HCT116 (cell line): ENCODE measurements at regions of chrX and their contacts with region 1.

Region 1: GRCh38 chrX:38175140-38175539 is 45.5 kb downstream of the SRPX start:
- DNase-seq: peak; percentile 24
- ATAC-seq: peak; percentile 86
- H3K4me3 ChIP-seq: no peak overlapping the region
- H3K27ac ChIP-seq: no peak overlapping the region
- H3K4me1 ChIP-seq: no peaks in the 10 kb centered on the region
- H3K27me3 ChIP-seq: no peaks in the 10 kb centered on the region
- CTCF ChIP-seq: peak; percentile 42 to 60 (median 56); a peak in 5 of 6 replicates
- POLR2A ChIP-seq: no peak
- RAD21 ChIP-seq: peak; percentile 78

Region 2: DNA sequence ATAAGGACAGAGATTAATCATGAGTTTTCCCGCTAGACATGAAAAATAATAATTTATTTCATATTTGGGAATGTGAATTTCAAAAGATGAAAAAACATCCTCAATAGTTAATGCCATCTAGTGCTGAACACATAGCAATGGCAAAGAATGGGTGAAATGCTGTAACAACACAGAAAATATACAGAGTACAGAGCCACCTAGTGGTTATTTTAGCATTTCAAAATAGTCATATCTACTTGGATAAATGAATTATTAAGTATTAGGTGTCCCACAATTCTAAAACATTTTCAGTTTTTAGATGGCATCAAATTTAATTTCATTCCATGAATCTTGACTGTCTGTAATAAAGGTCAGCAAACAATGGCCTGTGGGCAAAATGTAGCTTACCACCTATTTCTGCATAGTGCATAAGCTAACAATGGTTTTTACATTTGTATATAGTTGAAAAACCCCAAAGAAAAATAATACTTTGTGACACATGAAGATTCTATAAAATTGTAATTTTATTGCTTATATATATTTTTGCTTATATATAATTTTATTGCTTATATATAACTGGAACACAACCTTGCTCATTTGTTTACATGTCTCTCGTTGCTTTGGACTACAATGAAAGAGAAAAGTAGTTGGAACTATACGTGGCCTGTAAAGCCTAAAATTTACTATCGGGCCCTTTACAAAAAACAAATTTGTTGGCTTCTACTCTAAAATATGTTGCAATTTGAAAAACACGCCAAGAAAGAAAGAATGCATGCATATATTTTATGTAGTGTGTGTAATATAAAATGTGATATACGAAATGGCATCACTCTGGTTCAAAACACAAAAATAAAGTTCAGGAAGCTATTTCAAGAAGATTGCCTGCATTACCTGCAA is 1266.1 kb before region 1 on chrX:
- CTCF ChIA-PET with region 1: no interaction called
- POLR2A ChIA-PET with region 1: no interaction called
- RAD21 ChIA-PET with region 1: no interaction called
- intact Hi-C with region 1: loop called (anchors 5 kb)
- DNase-seq: peak; percentile 4
- ATAC-seq: peak; percentile 49; the same call in 1 of the 2 replicates
- H3K4me3 ChIP-seq: no peak overlapping the region
- H3K27ac ChIP-seq: no peak overlapping the region
- H3K4me1 ChIP-seq: no peaks in the 10 kb centered on the region
- H3K27me3 ChIP-seq: no peaks in the 10 kb centered on the region
- CTCF ChIP-seq: peak; percentile 38 to 57 (median 48); a peak in 5 of 6 replicates
- POLR2A ChIP-seq: no peak
- RAD21 ChIP-seq: peak; percentile 30; the same call in 1 of the 2 replicates

Region 3: GRCh38 chrX:37509349-37509748 is 665.8 kb before region 1 on chrX:
- CTCF ChIA-PET with region 1: interaction called, 3 read pairs
- POLR2A ChIA-PET with region 1: no interaction called
- RAD21 ChIA-PET with region 1: no interaction called
- intact Hi-C with region 1: loop called (anchors 5 kb)
- DNase-seq: no peak
- ATAC-seq: peak; percentile 75
- H3K4me3 ChIP-seq: no peak overlapping the region
- H3K27ac ChIP-seq: no peak overlapping the region
- H3K4me1 ChIP-seq: no peaks in the 10 kb centered on the region
- H3K27me3 ChIP-seq: no peaks in the 10 kb centered on the region
- CTCF ChIP-seq: peak; percentile 21 to 35 (median 26); a peak in 4 of 6 replicates
- POLR2A ChIP-seq: no peak
- RAD21 ChIP-seq: peak; percentile 48

Region 4: DNA sequence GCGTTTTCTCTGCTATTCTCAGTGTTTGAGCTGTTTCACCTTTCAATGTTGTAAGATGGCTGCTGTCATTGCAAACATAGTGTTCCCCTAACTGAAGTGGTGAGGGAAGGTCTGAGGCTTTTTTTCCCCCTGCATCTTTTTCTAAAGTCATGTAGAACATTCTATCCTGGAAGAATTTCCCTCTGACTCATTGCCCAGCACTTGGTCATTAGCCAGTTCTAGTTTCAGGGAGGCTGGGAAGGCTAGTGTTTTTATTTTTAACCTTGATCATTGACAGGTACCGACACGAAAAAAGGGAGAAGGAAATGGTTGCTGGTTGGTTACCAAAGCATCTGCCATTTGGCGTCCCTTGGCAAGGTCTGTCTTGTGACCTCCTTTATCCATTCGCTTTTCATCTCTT is 597.1 kb before region 1 on chrX:
- CTCF ChIA-PET with region 1: no interaction called
- POLR2A ChIA-PET with region 1: no interaction called
- RAD21 ChIA-PET with region 1: no interaction called
- intact Hi-C with region 1: loop called (anchors 5 kb)
- DNase-seq: no peak
- ATAC-seq: no peak
- H3K4me3 ChIP-seq: no peak overlapping the region
- H3K27ac ChIP-seq: no peak overlapping the region
- H3K4me1 ChIP-seq: no peaks in the 10 kb centered on the region
- H3K27me3 ChIP-seq: no peaks in the 10 kb centered on the region
- CTCF ChIP-seq: no peak
- POLR2A ChIP-seq: no peak
- RAD21 ChIP-seq: no peak

Region 5: DNA sequence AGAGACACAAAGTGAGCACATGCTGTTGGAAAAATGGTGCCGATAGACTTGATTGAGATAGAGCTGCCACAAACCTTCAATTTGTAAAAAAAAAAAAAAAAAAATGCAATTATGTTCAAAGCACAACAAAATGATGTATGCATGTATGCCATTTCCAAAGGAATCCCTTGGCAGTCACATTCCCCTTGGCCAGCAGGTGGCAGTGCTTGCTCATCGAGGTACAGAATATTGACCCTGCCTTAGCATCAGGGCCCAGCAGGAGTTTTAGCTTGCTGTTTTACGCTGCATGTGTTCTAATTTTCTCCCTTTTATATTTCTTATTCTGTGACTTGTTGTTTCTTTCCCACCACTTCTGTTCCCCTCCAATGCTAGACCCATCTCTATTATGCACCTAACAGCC is 429.8 kb before region 1 on chrX:
- CTCF ChIA-PET with region 1: interaction called, 4 read pairs
- POLR2A ChIA-PET with region 1: no interaction called
- RAD21 ChIA-PET with region 1: no interaction called
- intact Hi-C with region 1: loop called (anchors 2 kb)
- DNase-seq: peak; percentile 18
- ATAC-seq: peak; percentile 80
- H3K4me3 ChIP-seq: no peak overlapping the region
- H3K27ac ChIP-seq: no peak overlapping the region
- H3K4me1 ChIP-seq: peaks cover 0 to 9% of the 10 kb centered on the region in 2 experiments; a peak in 1 of 4 replicates
- H3K27me3 ChIP-seq: no peaks in the 10 kb centered on the region
- CTCF ChIP-seq: peak; percentile 53 to 69 (median 56)
- POLR2A ChIP-seq: no peak
- RAD21 ChIP-seq: peak; percentile 66

Region 6: GRCh38 chrX:37926700-37927099 is 248.4 kb before region 1 on chrX:
- CTCF ChIA-PET with region 1: no interaction called
- POLR2A ChIA-PET with region 1: no interaction called
- RAD21 ChIA-PET with region 1: no interaction called
- intact Hi-C with region 1: loop called (anchors 1 kb)
- DNase-seq: no peak
- ATAC-seq: peak; percentile 67
- H3K4me3 ChIP-seq: no peak overlapping the region
- H3K27ac ChIP-seq: no peak overlapping the region
- H3K4me1 ChIP-seq: peaks cover 0 to 6% of the 10 kb centered on the region in 2 experiments; a peak in 1 of 4 replicates
- H3K27me3 ChIP-seq: no peaks in the 10 kb centered on the region
- CTCF ChIP-seq: peak; percentile 28 to 54 (median 46); a peak in 5 of 6 replicates
- POLR2A ChIP-seq: no peak
- RAD21 ChIP-seq: peak; percentile 67

Region 7: GRCh38 chrX:38142610-38143009 is 32.5 kb before region 1 on chrX:
- CTCF ChIA-PET with region 1: no interaction called
- POLR2A ChIA-PET with region 1: no interaction called
- RAD21 ChIA-PET with region 1: no interaction called
- intact Hi-C with region 1: no loop called
- DNase-seq: no peak
- ATAC-seq: no peak
- H3K4me3 ChIP-seq: no peak overlapping the region
- H3K27ac ChIP-seq: no peak overlapping the region
- H3K4me1 ChIP-seq: no peaks in the 10 kb centered on the region
- H3K27me3 ChIP-seq: no peaks in the 10 kb centered on the region
- CTCF ChIP-seq: no peak
- POLR2A ChIP-seq: no peak
- RAD21 ChIP-seq: no peak